Adrenal gland (tissue), 19 donors: ENCODE measurements at regions of chr17 and their contacts with region 1.

Region 1: DNA sequence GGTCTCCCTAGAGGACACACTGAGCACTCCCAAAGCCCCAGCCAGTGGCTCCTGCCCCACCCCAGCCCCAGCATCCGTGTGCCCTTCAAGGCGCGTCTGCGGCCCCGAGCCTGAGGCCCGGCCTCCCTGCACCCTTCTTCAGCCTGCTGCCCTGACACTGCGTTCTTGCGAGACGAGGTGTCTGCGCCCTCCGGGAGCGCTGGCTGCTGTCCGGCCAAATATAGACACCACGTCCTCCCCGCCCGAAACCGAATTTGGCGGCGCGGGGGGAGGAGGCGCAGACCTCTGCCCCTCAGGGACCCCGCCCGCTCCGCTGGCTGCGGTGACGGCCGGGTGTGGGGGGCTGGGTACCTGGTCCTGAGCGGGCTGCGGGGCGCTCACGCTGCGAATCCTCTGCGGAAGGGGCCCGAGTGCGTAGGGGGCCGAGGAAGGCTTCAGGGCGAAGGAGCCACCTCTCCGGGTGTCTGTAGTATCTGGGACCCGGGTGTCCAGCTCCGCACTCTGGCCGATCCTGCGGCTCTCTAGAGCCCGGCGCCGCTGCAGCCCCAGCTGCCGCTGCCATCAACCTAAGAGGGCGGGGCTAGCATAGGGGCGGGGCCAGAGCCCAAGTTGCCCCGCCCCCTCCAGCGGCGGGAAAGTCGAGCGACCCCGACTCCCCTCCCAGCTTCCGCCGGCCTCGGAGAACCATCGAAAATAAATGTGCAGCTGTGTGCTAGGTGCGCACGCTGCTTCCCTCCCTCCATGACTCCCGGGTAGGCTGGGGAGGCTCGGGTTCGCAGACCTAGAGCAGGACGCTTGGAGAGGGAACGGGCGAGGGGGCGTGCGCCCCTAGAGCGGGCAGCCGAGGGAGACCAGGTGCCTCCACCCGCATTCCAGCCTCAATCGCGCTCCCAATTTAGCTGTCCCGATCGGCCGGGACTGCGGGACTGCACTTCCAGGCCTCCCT is at the start of gene CORO6:
- DNase-seq: peak in 6 of 7 donors; percentile 30 to 62 (median 50)
- H3K4me3 ChIP-seq: peak within 1 kb of the TSS; percentile 18 to 67 (median 34)
- H3K27ac ChIP-seq: no peak within 1 kb of the TSS
- H3K4me1 ChIP-seq: peaks cover 4 to 18% of the 10 kb centered on the region in 2 donors
- H3K27me3 ChIP-seq: no peaks in the 10 kb centered on the region
- CTCF ChIP-seq: no peak
- POLR2A ChIP-seq: no peak
- total RNA-seq, gene CORO6: 1.1 to 14.8 (median 5.5) TPM

Region 2: DNA sequence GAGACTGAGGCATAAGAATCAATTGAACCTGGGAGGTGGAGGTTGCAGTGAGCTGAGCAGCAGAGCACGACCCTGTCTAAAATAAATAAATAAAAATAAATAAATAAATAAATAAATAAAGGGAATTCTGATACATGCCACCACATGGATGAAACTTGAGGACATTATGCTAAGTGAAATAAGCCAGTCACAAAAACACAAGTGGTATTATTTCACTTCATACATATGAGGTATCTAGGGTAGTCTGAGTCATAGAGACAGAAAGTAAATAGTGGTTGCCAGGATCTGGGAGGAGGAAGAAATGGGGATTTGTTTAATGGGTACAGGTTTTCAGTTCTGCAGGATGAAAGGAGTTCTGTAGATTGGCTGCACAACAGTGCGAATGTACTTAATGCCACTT is 563.3 kb before region 1 on chr17:
- intact Hi-C with region 1: no loop called
- DNase-seq: no peak
- H3K4me3 ChIP-seq: no peak overlapping the region
- H3K27ac ChIP-seq: no peak overlapping the region
- H3K4me1 ChIP-seq: no peaks in the 10 kb centered on the region
- H3K27me3 ChIP-seq: no peaks in the 10 kb centered on the region
- CTCF ChIP-seq: no peak
- POLR2A ChIP-seq: no peak

Region 3: GRCh38 chr17:29682054-29682453 is 59.4 kb after region 1 on chr17:
- intact Hi-C with region 1: loop called in 1 of 2 experiments (anchors 10 kb)
- DNase-seq: no peak
- H3K4me3 ChIP-seq: no peak overlapping the region
- H3K27ac ChIP-seq: peak overlapping the region in 3 of 5 donors; percentile 37 to 60 (median 44)
- H3K4me1 ChIP-seq: peaks cover 9 to 25% of the 10 kb centered on the region in 2 donors
- H3K27me3 ChIP-seq: no peaks in the 10 kb centered on the region
- CTCF ChIP-seq: peak in 2 of 6 experiments; percentile 17 to 22
- POLR2A ChIP-seq: no peak

Region 4: DNA sequence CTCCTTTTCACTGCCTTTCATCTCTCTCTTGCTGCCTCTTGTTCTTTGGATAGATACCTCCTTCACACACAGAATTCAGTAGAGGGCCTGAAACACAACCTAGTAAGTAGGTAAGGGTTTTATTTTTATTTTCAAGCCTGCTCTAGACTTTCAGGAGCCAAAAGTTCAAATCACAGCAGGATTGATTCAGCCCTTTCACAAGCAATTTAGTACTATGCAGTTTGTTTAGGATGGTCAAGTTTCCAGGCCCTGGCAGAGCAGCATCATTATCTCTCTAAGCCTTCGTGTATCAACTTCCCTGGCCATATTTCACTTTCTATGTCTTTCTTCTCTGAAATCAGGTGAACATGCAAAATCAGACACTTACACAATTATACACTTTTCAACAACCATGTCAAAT is 148.9 kb after region 1 on chr17:
- intact Hi-C with region 1: loop called in 1 of 2 experiments (anchors 10 kb)
- DNase-seq: no peak
- H3K4me3 ChIP-seq: no peak overlapping the region
- H3K27ac ChIP-seq: no peak overlapping the region
- H3K4me1 ChIP-seq: no peaks in the 10 kb centered on the region
- H3K27me3 ChIP-seq: no peaks in the 10 kb centered on the region
- CTCF ChIP-seq: no peak
- POLR2A ChIP-seq: no peak